CD4-positive, alpha-beta memory T cell (primary cell): ENCODE measurements at regions of chr15 and their contacts with region 1.

Region 1: DNA sequence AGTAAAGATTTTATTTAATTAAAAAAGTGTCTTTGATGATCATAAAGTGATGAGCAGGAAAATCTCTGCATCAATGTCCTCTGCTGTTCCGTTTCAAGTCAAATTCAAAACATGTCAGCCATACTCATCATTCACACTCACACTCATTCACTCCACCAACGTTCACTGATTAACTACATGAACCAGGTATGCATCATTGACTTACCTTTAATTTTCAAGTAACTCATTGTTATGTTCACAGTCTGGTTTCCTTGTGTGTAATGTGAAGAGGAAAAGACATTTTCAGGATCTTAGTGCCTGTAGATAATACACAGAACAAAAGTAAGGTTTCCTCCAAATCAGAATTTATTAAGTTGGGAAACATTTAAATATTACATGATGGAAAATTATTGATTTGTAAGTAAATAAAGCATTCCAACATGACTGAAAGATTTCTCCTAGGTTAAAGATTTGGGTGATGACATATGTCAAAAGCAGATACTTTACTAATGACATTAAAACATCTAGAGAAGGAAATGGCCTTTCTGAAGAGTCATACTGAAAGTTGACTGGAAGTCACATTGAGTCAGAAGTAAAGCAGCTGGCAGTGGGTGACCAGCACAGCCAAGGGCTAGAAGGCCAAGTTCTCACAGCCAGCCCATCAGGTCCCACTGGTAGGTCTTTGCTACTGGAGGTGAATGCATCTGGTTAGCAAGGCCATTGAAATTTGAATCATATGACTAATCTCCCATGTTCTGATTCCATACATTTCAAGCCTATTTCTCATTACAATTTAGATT is 251.9 kb downstream of the CDIN1 start:
- DNase-seq: no peak
- H3K4me3 ChIP-seq: no peak overlapping the region
- H3K4me3 Mint-ChIP-seq: no peak overlapping the region
- H3K27ac ChIP-seq: no peak overlapping the region
- H3K27ac Mint-ChIP-seq: no peak overlapping the region
- H3K4me1 ChIP-seq: no peaks in the 10 kb centered on the region
- H3K4me1 Mint-ChIP-seq: no peaks in the 10 kb centered on the region
- H3K27me3 ChIP-seq: no peaks in the 10 kb centered on the region
- H3K27me3 Mint-ChIP-seq: peaks cover 4 to 6% of the 10 kb centered on the region in 2 donors

Region 2: GRCh38 chr15:36688310-36689011 is 142.9 kb before region 1 on chr15:
- CTCF ChIA-PET with region 1: no interaction called
- POLR2A ChIA-PET with region 1: no interaction called
- intact Hi-C with region 1: no loop called
- DNase-seq: no peak
- H3K4me3 ChIP-seq: no peak overlapping the region
- H3K4me3 Mint-ChIP-seq: no peak overlapping the region
- H3K27ac ChIP-seq: no peak overlapping the region
- H3K27ac Mint-ChIP-seq: no peak overlapping the region
- H3K4me1 ChIP-seq: no peaks in the 10 kb centered on the region
- H3K4me1 Mint-ChIP-seq: no peaks in the 10 kb centered on the region
- H3K27me3 ChIP-seq: no peaks in the 10 kb centered on the region
- H3K27me3 Mint-ChIP-seq: no peaks in the 10 kb centered on the region

Region 3: DNA sequence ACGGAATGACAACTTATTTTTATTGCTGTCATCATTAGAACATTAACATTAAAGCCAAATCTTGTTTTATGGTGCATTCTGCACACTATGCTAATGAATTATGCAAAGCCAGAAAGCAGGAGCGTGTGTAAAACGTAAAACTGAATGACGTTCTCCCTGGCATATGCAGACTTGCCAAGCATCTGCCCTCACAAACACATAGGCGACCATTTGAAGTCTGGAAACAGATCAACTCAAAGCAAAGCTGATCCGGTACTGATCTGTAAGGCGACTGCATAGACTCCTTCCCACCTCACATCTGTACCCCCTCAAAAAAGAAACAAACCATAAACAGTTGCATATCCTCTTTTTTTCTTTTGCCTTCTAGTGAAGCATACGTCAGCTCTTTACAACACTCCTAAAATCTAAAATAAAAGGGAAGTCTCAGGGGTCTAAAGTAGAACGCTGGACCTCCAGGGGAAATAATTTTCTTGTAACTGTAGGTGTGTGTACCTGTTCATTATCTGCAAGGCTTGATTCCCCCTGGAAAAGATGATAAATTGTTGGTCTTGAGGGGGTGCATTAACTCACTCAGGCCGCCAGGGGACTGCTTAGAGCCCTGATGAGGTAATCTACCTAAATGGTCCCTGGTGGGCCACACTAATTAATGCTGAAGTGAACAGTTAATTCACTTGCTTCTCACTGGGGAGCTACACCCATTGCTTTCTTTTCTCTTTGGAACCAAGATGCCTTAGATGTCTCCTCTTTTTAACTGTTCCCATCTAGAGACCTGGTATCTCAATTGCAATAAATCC is 20.5 kb before region 1 on chr15:
- CTCF ChIA-PET with region 1: no interaction called
- POLR2A ChIA-PET with region 1: no interaction called
- intact Hi-C with region 1: no loop called
- DNase-seq: no peak
- H3K4me3 ChIP-seq: no peak overlapping the region
- H3K4me3 Mint-ChIP-seq: no peak overlapping the region
- H3K27ac ChIP-seq: no peak overlapping the region
- H3K27ac Mint-ChIP-seq: no peak overlapping the region
- H3K4me1 ChIP-seq: no peaks in the 10 kb centered on the region
- H3K4me1 Mint-ChIP-seq: no peaks in the 10 kb centered on the region
- H3K27me3 ChIP-seq: no peaks in the 10 kb centered on the region
- H3K27me3 Mint-ChIP-seq: no peaks in the 10 kb centered on the region

Region 4: DNA sequence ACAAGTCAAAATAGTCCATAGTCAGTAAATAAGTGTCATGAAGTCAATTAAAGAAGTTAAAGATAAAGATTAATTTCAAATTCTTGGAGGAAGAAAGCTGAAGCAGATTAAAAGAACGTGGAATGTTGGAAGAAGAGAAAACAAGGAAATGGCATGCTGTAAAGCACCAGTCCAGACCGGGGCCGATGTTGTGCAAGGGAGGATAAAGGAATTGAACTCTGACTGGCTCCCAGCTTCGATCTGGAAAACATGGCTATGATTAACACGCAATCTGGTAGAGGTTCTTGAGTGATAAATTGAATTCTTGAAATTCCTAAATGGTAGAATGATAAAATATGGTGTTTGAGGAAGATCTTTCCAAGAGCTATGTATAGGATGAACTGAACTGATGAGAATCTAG is 74.6 kb after region 1 on chr15:
- CTCF ChIA-PET with region 1: no interaction called
- POLR2A ChIA-PET with region 1: no interaction called
- intact Hi-C with region 1: loop called (anchors 10 kb)
- DNase-seq: no peak
- H3K4me3 ChIP-seq: no peak overlapping the region
- H3K4me3 Mint-ChIP-seq: no peak overlapping the region
- H3K27ac ChIP-seq: no peak overlapping the region
- H3K27ac Mint-ChIP-seq: no peak overlapping the region
- H3K4me1 ChIP-seq: no peaks in the 10 kb centered on the region
- H3K4me1 Mint-ChIP-seq: no peaks in the 10 kb centered on the region
- H3K27me3 ChIP-seq: no peaks in the 10 kb centered on the region
- H3K27me3 Mint-ChIP-seq: peaks cover 0 to 2% of the 10 kb centered on the region in 2 donors